WTC11 (cell line): ENCODE measurements at regions of chr1 and their contacts with region 1.

Region 1: DNA sequence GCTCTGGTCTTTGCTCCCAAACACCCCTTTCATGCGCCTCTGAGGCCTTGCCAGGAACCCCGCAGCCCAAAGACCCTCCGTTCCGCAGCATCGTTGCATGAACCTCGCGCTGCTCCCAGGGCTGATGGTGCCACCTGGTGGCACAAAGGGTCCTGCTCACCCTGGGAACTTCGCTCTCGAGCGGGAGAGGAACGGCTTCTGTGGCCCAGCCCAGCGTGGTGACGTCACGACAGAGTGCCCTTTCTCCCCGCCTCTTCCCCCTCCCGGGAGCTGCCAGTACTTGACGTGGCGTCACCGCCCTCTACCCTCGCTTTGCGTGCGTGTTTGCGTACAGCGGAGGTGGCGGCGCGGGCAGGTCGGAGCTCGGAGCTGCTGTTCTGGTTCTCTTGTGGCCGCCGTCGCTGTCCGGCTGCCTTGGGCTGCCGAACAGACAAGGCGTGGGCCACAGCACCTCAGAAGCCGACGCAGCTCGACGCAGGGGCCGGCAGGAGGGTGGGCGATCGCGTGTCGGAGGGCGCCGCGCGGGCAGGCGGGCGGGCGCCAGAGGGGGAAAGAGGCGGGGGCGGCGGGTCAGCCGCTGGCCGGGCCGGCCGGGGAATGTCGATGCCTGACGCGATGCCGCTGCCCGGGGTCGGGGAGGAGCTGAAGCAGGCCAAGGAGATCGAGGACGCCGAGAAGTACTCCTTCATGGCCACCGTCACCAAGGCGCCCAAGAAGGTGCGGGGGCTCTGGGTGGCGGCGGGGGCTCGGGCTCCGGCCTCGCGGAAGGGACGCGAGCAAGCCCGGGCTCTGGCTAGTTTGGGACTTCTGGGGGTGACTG is at the start of gene AHCYL1:
- DNase-seq: peak; percentile 99
- ATAC-seq: peak; percentile 93
- H3K4me3 Mint-ChIP-seq: peak within 1 kb of the TSS; percentile 96
- H3K27ac Mint-ChIP-seq: peak within 1 kb of the TSS; percentile 93
- H3K4me1 Mint-ChIP-seq: peaks cover 42% of the 10 kb centered on the region
- H3K27me3 Mint-ChIP-seq: no peaks in the 10 kb centered on the region; the same call in 1 of the 2 replicates
- CTCF ChIP-seq: peak; percentile 92
- total RNA-seq, gene AHCYL1: 92.1 to 99.4 TPM (median 98.6 TPM) in 3 replicates

Region 2: DNA sequence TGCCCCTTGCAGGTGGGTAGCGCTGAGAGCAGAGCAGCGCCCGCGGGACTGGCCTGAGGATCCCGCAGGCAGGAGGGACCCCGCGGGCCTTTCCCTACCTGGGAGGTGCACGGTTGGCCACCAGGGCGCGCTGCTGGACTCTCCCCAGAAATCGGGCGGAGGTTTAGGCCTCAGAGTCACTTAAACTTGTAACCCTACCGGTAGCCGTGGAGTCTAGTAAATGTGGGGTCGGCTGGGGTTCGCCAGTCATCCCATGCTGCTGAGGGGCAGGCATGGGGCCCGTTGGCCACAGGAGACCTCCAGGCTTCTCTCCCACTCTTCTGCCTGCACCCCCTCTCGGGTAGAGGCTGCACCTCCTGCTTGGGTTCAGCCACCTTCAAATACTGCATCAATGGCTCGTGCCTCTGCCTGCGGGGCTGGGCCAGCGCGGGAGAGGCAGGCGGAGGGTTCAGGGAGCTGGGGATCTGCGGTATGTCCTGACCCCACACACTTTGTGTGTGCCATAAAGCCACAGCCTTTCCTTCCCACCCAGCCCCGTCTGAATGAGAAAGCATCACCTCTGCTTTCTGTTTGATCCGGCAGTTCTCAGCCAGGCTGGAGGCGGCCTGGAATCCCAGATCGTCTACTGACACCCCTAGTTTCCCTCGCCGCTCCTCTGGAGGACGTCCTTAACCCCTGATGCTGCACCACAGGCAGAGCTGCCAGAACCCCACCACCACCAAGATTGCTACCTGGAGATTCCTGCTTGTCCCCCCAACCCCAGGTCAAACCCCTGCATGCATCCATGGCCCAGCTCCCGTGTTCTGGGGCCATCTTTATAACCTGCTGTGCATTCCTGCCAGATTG is 341.1 kb before region 1 on chr1:
- CTCF ChIA-PET with region 1: interaction called, 78 read pairs
- POLR2A ChIA-PET with region 1: no interaction called
- DNase-seq: peak; percentile 97
- ATAC-seq: peak; percentile 93
- H3K4me3 Mint-ChIP-seq: no peak overlapping the region
- H3K27ac Mint-ChIP-seq: no peak overlapping the region
- H3K4me1 Mint-ChIP-seq: peaks cover 7% of the 10 kb centered on the region
- H3K27me3 Mint-ChIP-seq: peaks cover 5% of the 10 kb centered on the region; the same call in 1 of the 2 replicates
- CTCF ChIP-seq: peak; percentile 76; the same call in 1 of the 2 replicates

Region 3: DNA sequence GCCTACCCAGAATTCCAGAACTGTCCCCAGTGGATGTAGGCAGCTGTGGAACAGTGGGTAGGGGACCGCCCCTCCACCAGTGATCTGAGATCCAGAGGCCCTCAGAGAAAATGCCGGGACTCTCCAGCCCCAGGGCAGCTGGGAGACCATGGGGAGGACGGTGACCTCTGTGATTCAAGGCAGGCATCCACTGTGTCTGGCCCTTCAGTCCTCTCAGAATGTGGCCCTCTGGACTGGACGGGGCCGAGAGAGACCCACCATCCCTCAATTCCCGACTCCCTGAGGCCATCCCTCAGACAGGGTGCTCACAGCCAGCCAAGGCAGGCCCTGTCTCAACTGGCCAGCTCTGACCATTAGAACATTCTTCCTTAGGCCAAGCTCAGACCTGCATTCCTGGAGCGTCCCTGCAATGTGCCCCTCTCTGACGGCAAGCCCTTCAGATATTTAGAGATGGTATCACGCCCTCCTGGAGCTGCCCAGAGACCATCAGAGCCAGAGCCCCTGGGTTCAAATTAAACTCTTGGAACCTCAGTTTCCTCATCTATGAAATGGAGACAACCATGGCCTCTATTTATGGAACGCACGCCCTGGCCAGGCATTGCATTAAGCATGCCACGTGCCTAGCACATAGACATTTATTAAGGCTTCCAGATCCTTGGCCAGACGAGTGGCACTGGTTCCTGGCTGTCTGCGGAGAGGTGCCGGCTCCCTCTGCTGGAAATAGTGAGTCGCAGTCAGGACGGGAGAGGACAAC is 211.3 kb before region 1 on chr1:
- CTCF ChIA-PET with region 1: interaction called, 341 read pairs
- POLR2A ChIA-PET with region 1: interaction called, 9 read pairs
- DNase-seq: peak; percentile 73
- ATAC-seq: peak; percentile 83
- H3K4me3 Mint-ChIP-seq: no peak overlapping the region
- H3K27ac Mint-ChIP-seq: no peak overlapping the region
- H3K4me1 Mint-ChIP-seq: peaks cover 5% of the 10 kb centered on the region
- H3K27me3 Mint-ChIP-seq: peaks cover 7% of the 10 kb centered on the region
- CTCF ChIP-seq: peak; percentile 38; the same call in 1 of the 2 replicates

Region 4: DNA sequence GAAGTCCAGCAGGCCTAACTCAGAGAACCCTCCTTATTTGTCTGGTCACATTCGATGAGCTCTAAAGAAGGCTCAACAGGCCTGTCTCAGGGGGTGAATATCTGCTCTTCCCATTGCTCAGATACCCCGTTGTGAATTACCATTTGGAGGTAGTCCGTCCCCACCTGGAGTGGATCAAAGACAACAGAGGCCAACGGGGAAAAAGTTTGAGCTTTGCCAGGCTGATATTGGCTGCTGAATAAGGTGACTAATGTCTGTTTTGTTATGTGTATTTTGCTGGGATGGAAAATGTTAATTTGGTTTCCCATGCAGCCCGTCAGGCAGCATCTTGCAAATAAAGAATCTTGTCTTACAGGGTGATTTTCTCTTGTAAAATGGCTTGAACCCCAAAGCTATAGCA is 151.7 kb before region 1 on chr1:
- CTCF ChIA-PET with region 1: interaction called, 13 read pairs
- POLR2A ChIA-PET with region 1: no interaction called
- DNase-seq: no peak
- ATAC-seq: peak; percentile 80
- H3K4me3 Mint-ChIP-seq: peak overlapping the region; percentile 54
- H3K27ac Mint-ChIP-seq: peak overlapping the region; percentile 91
- H3K4me1 Mint-ChIP-seq: peaks cover 48% of the 10 kb centered on the region
- H3K27me3 Mint-ChIP-seq: peaks cover 3% of the 10 kb centered on the region; the same call in 1 of the 2 replicates
- CTCF ChIP-seq: no peak

Region 5: DNA sequence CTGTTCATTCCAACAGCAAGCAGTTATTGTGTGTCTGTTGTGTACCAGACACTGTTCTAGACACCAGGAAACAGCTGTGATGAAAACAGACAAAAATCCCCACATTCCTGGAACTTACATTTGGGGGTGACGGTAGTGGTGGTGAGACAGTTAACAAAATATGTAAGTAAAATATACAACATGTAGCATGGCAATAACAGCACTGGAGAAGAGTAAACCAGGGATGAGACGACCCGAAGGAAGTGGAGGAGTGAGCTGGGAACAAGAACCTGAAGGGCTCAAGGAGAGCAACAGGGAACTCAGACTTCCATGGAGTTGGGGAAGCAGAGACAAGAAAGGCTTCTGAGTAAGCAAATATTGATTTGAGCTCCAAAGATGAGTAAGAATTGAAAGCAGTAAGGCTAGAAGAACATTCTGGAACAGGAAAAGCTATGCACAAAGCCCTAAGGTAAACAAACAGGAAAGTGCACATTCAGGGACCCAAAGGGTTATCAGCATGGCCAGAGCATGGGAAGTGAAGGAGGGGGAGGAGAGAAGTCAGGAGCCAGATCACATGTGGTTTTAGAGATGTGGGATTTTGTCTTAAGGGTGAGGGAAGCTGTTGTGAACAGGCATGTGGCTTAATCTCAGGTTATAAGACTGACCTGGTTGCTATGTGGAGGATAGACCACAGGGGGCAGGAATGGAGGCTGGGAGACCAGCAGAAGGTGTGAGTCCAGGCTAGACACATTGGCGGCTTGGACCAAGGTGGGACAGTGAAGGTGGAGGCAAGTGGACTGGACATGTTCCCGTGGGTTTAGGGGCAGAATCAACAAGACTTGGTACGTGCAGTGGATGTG is 66.7 kb before region 1 on chr1:
- CTCF ChIA-PET with region 1: interaction called, 80 read pairs
- POLR2A ChIA-PET with region 1: interaction called, 6 read pairs
- DNase-seq: no peak
- ATAC-seq: 0 out of 2 replicates have a peak, but pooled peaks have one; percentile 61
- H3K4me3 Mint-ChIP-seq: no peak overlapping the region
- H3K27ac Mint-ChIP-seq: no peak overlapping the region
- H3K4me1 Mint-ChIP-seq: peaks cover 1% of the 10 kb centered on the region
- H3K27me3 Mint-ChIP-seq: peaks cover 5% of the 10 kb centered on the region
- CTCF ChIP-seq: no peak

Region 6: DNA sequence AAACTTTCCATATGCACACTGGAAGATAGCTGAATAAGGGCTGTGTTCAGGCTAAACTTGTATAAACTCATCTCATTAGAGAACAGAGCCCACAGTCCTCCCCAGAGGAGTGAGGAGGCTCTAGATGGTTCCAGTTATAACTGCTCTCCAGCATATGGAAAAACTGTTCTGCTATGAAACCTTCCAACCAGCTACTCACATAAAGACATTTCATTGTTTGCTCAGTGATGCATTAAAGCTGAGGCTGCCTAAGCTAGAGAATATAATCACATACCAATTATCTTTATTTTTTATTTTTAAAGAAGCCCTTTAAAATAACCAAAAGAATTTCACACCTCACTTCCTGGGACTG is 13.2 kb after region 1 on chr1:
- CTCF ChIA-PET with region 1: interaction called, 16 read pairs
- POLR2A ChIA-PET with region 1: interaction called, 5 read pairs
- DNase-seq: no peak
- ATAC-seq: no peak
- H3K4me3 Mint-ChIP-seq: no peak overlapping the region
- H3K27ac Mint-ChIP-seq: no peak overlapping the region
- H3K4me1 Mint-ChIP-seq: peaks cover 15% of the 10 kb centered on the region
- H3K27me3 Mint-ChIP-seq: no peaks in the 10 kb centered on the region
- CTCF ChIP-seq: no peak

Region 7: GRCh38 chr1:110229348-110230001 is 244.8 kb after region 1 on chr1:
- CTCF ChIA-PET with region 1: no interaction called
- POLR2A ChIA-PET with region 1: no interaction called
- DNase-seq: no peak
- ATAC-seq: peak; percentile 59
- H3K4me3 Mint-ChIP-seq: no peak overlapping the region
- H3K27ac Mint-ChIP-seq: peak overlapping the region; percentile 66
- H3K4me1 Mint-ChIP-seq: peaks cover 4% of the 10 kb centered on the region
- H3K27me3 Mint-ChIP-seq: no peaks in the 10 kb centered on the region
- CTCF ChIP-seq: no peak